Activated naive CD4-positive, alpha-beta T cell treated with anti-CD3 and anti-CD28 coated beads for 36 hours (primary cell): ENCODE measurements at regions of chr6 and their contacts with region 1.

Region 1: GRCh38 chr6:17599885-17600526 is at the start of gene FAM8A1:
- DNase-seq: peak; percentile 98
- H3K4me3 Mint-ChIP-seq: peak within 1 kb of the TSS; percentile 75
- H3K27ac Mint-ChIP-seq: peak within 1 kb of the TSS; percentile 53
- H3K4me1 Mint-ChIP-seq: peaks cover 29% of the 10 kb centered on the region
- H3K27me3 Mint-ChIP-seq: no peaks in the 10 kb centered on the region
- total RNA-seq, gene FAM8A1: 2.9 to 3.0 TPM

Region 2: DNA sequence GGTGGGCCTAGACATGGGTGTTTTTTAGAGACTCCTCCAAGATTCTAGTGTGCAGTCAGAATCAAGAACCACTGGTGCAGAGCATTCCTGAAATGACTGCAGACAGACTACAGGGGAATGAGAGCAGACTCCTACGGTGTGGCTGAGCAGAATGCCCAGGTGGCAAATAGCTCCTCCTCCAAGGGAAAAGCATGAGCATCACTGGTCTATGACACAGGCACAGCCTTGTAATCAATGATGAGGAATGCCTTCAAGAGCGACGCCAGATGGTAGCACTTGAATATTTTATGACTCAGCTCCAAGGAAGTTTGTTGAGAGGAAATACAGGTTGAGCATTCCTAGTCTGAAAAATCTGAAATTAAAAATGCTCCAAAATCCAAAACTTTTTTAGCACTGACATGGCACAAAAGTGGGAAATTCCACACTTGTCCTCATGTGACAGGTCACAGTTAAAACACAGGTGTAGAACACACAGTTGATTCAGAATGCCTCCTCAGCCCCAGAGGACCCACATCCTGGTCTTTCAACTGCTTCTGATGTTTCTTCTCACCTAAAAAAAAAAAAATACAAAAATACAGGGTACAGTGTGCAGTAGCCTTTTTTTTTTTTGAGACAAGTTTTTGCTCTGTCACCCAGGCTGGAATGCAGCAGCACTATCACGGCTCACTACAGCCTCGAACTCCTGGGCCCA is 10.5 kb before region 1 on chr6:
- CTCF ChIA-PET with region 1: interaction called, 7 read pairs
- intact Hi-C with region 1: loop called (anchors 1 kb)
- DNase-seq: peak; percentile 46
- H3K4me3 Mint-ChIP-seq: no peak overlapping the region
- H3K27ac Mint-ChIP-seq: no peak overlapping the region
- H3K4me1 Mint-ChIP-seq: peaks cover 13% of the 10 kb centered on the region
- H3K27me3 Mint-ChIP-seq: no peaks in the 10 kb centered on the region

Region 3: DNA sequence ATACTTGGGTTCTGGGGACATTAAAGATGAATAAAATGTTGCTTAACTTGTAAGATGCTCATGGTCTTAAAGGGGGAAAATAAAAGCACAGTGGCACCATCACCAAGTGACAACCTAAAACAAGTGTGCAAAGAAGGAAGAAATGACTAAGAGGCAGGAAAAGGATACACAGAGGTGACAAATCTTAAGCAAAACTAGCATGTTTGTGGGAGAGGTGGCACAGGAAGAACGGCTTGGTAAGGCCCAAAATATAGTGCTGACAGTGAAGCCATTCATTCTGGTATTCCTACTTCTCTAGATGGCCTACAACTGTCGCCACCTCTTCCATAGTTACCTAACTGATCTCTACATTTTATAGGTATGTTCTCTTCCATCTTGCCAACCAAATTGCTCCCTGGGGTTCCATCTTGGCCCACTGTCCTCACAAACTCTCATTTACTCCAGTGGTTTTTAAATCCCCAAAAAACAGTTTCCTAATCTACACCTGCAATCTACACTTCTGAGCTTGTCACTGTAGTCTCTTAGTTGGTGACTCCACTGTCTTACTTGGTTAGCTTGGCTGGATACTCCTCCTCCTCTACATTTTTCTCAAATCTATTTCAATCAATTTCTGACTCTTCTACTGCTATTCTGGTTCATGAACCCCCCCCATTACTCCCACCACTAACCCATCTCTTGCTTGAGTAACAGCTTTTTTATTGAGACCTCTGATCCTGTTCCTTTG is 33.6 kb after region 1 on chr6:
- CTCF ChIA-PET with region 1: no interaction called
- intact Hi-C with region 1: loop called (anchors 2 kb)
- DNase-seq: peak; percentile 50
- H3K4me3 Mint-ChIP-seq: no peak overlapping the region
- H3K27ac Mint-ChIP-seq: peak overlapping the region; percentile 76
- H3K4me1 Mint-ChIP-seq: peaks cover 47% of the 10 kb centered on the region
- H3K27me3 Mint-ChIP-seq: no peaks in the 10 kb centered on the region

Region 4: DNA sequence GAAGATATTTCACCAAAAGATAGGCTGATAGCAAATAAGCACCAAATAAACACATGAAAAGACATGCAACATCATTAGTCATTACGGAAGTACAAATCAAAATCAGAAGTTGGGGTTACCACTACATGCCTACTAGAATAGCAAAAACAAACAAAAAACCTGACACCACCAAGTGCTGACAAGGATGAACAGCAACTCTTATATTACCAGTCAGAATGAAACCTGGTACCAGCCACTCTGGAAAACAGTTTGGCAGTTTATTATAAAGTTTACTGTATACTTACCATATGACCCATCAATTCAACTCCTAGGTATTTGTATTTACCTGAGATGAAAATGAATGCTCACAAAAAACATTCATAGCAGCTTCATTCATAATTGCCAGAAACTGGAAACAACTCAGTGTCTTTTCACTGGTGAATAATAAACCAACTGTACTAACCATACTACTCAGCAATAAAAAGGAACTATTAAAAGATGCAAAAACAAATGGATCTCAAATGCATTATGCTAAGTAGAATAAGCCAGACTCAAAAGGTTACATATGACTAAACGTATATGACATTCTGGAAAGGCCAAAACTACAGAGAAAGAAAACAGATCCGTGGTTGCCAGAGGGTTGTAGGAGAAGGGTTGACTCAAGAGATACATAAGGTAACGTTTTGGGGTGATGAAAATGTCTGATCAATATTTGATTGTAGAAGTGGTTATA is 73.7 kb after region 1 on chr6:
- CTCF ChIA-PET with region 1: no interaction called
- intact Hi-C with region 1: loop called (anchors 5 kb)
- DNase-seq: no peak
- H3K4me3 Mint-ChIP-seq: no peak overlapping the region
- H3K27ac Mint-ChIP-seq: no peak overlapping the region
- H3K4me1 Mint-ChIP-seq: peaks cover 28% of the 10 kb centered on the region
- H3K27me3 Mint-ChIP-seq: no peaks in the 10 kb centered on the region

Region 5: DNA sequence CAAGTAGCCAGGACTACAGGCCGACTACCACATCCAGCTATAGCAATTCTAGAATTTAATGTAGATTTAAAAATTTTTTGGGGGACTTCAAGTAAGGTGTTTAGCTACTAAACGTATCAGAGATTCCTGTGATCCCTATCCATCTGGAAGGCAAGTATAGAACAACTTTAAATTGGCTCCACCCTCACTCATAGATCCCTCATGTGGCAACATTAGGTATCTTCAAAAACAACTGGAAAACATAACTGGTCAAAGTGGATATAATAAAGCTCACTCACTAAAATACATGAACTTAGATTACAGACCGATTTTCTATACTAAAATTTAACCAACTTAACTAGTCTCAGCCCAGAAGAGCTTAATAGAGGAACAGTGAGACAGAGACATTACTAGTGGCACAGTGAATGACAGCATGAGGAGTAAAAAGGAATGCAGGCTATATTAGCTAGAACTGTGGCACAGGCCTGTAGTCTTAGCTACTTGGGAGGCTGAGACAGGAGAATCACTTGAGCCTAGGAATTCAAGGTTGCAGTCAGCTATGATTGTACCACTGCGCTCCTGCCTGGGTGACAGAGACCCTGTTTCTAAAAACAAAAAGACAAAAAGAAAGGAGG is 92.0 kb after region 1 on chr6:
- CTCF ChIA-PET with region 1: no interaction called
- intact Hi-C with region 1: no loop called
- DNase-seq: no peak
- H3K4me3 Mint-ChIP-seq: no peak overlapping the region
- H3K27ac Mint-ChIP-seq: no peak overlapping the region
- H3K4me1 Mint-ChIP-seq: peaks cover 57% of the 10 kb centered on the region
- H3K27me3 Mint-ChIP-seq: no peaks in the 10 kb centered on the region

Region 6: DNA sequence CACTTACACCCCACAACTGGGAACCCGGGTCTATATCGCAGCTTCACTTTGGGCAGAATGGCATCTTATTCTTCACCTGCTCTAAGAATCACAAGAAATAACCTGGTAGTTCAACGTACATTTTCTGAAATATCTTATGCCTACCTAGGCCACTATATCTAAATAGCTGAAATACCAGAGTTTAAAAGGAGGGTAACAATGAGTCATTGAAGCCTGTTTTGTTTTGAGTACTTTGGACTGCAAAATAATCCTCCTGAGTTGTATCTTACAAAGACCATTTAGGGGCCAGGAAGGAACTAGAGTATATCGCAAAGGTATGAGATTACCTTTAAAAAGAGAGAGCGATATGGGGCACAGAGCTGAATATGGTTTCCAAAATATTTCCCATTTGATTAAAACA is 203.4 kb after region 1 on chr6:
- CTCF ChIA-PET with region 1: interaction called, 8 read pairs
- intact Hi-C with region 1: loop called (anchors 5 kb)
- DNase-seq: no peak
- H3K4me3 Mint-ChIP-seq: no peak overlapping the region
- H3K27ac Mint-ChIP-seq: no peak overlapping the region
- H3K4me1 Mint-ChIP-seq: no peaks in the 10 kb centered on the region
- H3K27me3 Mint-ChIP-seq: peaks cover 8% of the 10 kb centered on the region

Region 7: GRCh38 chr6:18122124-18123093 is 522.4 kb after region 1 on chr6 and contains the start of gene NHLRC1:
- CTCF ChIA-PET with region 1: no interaction called
- intact Hi-C with region 1: loop called (anchors 5 kb)
- DNase-seq: peak; percentile 85
- H3K4me3 Mint-ChIP-seq: peak within 1 kb of the TSS; percentile 67
- H3K27ac Mint-ChIP-seq: no peak within 1 kb of the TSS
- H3K4me1 Mint-ChIP-seq: peaks cover 9% of the 10 kb centered on the region
- H3K27me3 Mint-ChIP-seq: peaks cover 25% of the 10 kb centered on the region
- total RNA-seq, gene NHLRC1: 0.10 to 0.25 TPM